Ascending aorta (tissue), 2 donors: ENCODE measurements at regions of chr16 and their contacts with region 1.

Region 1: DNA sequence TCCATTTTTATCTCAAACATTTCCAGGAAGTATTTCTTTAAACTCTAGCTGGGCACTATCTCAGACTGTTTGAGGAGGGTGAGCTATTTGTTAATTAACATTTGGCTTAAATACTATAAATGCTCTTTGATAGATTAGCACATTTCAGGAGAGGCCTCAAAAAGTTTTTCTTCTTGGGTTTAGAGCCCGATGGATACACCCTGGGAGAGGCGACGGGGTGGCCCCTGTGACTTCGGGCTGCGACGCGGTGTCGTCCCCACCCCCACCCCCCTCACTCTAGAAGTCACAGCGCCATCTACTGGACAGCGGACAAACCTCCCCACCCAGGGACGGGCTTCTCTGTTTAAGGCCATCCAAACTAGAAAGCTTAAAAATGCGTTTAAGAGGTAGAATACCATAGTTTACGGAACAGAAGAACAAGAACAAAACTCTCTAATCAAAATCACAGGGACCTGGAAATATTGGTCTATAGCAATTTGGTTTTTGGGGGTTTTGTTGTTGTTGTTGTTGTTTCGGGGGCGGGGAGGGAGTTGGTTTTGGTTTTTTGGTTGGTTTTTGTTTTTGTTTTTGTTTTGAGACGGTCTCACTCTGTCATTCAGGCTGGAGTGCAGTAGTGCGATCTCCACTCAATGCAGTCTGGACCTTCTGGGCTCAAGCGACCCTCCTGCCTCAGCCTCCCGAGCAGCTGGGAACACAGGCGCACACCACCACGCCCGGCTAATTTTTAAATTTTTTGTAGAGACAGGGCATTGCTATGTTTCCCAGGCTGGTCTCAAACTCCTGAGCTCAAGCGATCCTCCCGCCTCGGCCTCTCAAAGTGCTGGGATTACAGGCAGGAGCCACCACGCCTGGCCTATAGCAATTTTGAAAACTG is 254.4 kb downstream of the C16orf95 start:
- DNase-seq: peak in 1 of 2 donors; percentile 89
- H3K4me3 ChIP-seq: peak overlapping the region; percentile 11 to 66
- H3K27ac ChIP-seq: peak overlapping the region; percentile 86 to 90
- H3K4me1 ChIP-seq: peaks cover 0 to 14% of the 10 kb centered on the region in 2 donors
- H3K27me3 ChIP-seq: no peaks in the 10 kb centered on the region
- CTCF ChIP-seq: peak; percentile 86 to 91 (median 88)

Region 2: DNA sequence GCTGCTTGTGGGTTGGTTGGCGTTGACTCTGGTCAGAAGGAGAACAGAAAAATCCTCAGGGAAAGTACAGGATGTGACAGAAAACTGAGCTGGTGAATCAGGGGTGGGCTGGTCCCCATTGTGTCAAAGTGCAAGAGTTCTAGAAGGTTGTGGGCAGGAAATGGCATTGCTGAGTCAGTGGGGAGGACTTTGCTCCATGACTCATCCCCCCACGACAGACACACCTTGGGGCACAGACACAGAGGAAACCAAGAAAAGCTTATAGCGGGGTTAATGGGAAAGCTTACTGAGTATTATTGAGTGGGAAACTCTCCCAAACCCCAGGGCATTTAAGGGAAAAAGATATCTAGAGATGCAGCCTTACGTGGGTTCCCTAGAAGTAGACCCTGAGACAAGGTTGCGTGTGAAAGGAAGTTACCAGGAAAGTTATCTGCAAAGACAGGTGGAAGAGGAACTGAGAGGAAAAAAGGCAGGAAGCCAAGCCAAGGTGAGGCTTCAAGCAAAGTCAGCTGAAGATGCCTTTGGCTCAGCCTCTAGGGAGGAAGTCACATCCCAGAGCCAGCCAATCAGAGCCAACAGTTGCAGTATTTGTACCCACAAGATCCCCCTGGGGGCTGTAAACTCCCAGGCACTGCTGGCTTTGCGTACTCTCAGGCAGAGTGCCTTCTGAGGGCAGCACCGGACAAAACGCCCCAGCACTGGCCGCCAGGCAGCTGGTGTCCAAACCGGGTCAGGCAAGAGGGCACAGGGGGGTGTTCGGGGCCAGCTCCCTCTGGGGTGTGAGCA is 398.1 kb before region 1 on chr16:
- intact Hi-C with region 1: loop called (anchors 5 kb)
- DNase-seq: peak in 1 of 2 donors; percentile 90
- H3K4me3 ChIP-seq: no peak overlapping the region
- H3K27ac ChIP-seq: peak overlapping the region; percentile 74 to 75
- H3K4me1 ChIP-seq: peaks cover 9 to 35% of the 10 kb centered on the region in 2 donors
- H3K27me3 ChIP-seq: no peaks in the 10 kb centered on the region
- CTCF ChIP-seq: no peak

Region 3: GRCh38 chr16:86740906-86741799 is 321.7 kb before region 1 on chr16:
- intact Hi-C with region 1: loop called (anchors 1 kb)
- DNase-seq: peak; percentile 60 to 93
- H3K4me3 ChIP-seq: peak overlapping the region; percentile 46 to 58
- H3K27ac ChIP-seq: peak overlapping the region; percentile 94 to 100
- H3K4me1 ChIP-seq: peaks cover 0 to 16% of the 10 kb centered on the region in 2 donors
- H3K27me3 ChIP-seq: no peaks in the 10 kb centered on the region
- CTCF ChIP-seq: no peak

Region 4: GRCh38 chr16:86931399-86931941 is 131.3 kb before region 1 on chr16:
- intact Hi-C with region 1: loop called (anchors 5 kb)
- DNase-seq: peak in 1 of 2 donors; percentile 80
- H3K4me3 ChIP-seq: peak overlapping the region; percentile 0 to 27
- H3K27ac ChIP-seq: peak overlapping the region; percentile 52 to 59
- H3K4me1 ChIP-seq: peaks cover 0 to 28% of the 10 kb centered on the region in 2 donors
- H3K27me3 ChIP-seq: no peaks in the 10 kb centered on the region
- CTCF ChIP-seq: peak in 1 of 3 experiments; percentile 19